ENCODE measurements at regions of chr22 and their contacts with region 1.

Region 1: GRCh38 chr22:41621099-41621910 is at the start of gene XRCC6:
- H3K4me3 Mint-ChIP-seq: peak within 1 kb of the TSS; percentile 92
- H3K27ac Mint-ChIP-seq: peak within 1 kb of the TSS; percentile 94
- H3K4me1 Mint-ChIP-seq: peaks cover 39% of the 10 kb centered on the region
- H3K27me3 Mint-ChIP-seq: no peaks in the 10 kb centered on the region

Region 2: GRCh38 chr22:41543854-41544670 is 77.2 kb before region 1 on chr22 and contains the start of gene POLR3H:
- intact Hi-C with region 1: loop called (anchors 2 kb)
- H3K4me3 Mint-ChIP-seq: peak within 1 kb of the TSS; percentile 90
- H3K27ac Mint-ChIP-seq: peak within 1 kb of the TSS; percentile 89
- H3K4me1 Mint-ChIP-seq: peaks cover 44% of the 10 kb centered on the region
- H3K27me3 Mint-ChIP-seq: peaks cover 5% of the 10 kb centered on the region

Region 3: DNA sequence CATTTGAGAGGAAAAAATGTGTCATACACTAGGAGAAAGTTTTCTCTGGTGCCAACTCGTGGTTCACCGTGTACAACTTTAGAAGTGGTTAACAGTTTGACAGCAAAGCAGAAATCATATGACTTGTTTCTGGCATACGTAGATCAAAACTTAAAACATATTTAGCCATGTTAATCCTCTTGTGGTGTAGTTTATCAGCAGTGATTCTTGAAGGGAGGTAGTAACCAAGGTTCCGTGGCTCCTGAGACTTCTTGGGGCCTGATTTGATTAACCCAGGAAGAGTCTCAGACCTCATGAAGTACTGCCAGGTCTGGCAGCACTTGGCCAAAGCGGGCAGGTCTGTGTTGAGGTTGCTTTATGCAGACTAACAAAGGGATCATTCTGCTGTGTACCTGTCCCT is 252.1 kb after region 1 on chr22:
- intact Hi-C with region 1: no loop called
- H3K4me3 Mint-ChIP-seq: no peak overlapping the region
- H3K27ac Mint-ChIP-seq: no peak overlapping the region
- H3K4me1 Mint-ChIP-seq: no peaks in the 10 kb centered on the region
- H3K27me3 Mint-ChIP-seq: no peaks in the 10 kb centered on the region

Measured in dendritic cell treated with granulocyte-macrophage colony-stimulating factor and Interleukin-4, amounts not matched to agents 40 ng/mL and 50 ng/mL, for 4 days (primary cell).